Head of caudate nucleus (tissue), 42 donors: ENCODE measurements at regions of chr2 and their contacts with region 1.

Region 1: GRCh38 chr2:109128048-109128465 is 948 bp upstream of the SH3RF3 start:
- DNase-seq: peak; percentile 39 to 91 (median 78)

Region 2: DNA sequence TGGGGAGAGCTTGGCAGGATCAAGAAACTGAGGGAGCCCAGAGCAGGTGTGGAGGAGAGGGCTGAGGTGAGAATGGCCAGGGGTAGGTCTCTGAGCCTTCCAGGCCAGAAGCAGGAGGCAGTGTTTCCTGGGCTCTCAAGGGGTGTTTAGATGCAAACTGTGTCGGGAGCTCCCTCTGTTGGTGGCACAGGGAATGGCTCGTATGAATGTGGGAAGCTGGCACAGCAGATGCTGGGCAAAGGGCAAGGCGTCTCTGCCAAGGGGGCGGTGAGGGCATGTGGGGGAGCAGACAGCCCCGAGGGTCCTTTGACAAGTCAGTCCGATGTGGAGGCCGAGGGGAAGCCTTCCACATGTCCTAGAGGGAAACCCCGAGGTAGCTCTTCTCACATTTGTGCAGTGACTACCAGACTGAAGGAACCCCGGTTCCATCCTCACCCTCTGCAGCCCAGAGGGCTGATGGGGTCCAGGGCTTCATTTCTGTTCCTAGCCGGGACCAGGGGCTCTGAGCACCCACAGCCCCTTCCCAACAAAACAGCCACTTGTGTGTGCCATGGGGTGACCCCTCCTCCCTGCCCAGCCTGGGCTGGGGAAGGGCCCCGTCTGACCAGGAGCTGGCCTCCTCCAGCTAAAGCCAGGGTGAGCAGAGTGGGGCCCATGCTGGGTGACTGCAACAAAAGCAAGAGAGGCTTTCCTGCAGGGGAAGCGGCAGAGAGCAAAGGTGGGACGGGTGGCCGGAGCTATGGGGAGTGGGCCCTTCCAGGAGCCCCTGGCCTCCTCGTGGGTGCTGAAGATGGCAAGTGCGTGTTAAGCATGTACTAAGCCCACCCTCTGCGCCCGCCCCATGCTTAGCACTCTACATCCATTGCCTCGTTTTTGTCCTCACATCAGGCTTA is 382.3 kb after region 1 on chr2:
- intact Hi-C with region 1: loop called (anchors 5 kb)
- DNase-seq: peak; percentile 51 to 89 (median 80)